ENCODE measurements at regions of chr1 and their contacts with region 1.

Region 1: DNA sequence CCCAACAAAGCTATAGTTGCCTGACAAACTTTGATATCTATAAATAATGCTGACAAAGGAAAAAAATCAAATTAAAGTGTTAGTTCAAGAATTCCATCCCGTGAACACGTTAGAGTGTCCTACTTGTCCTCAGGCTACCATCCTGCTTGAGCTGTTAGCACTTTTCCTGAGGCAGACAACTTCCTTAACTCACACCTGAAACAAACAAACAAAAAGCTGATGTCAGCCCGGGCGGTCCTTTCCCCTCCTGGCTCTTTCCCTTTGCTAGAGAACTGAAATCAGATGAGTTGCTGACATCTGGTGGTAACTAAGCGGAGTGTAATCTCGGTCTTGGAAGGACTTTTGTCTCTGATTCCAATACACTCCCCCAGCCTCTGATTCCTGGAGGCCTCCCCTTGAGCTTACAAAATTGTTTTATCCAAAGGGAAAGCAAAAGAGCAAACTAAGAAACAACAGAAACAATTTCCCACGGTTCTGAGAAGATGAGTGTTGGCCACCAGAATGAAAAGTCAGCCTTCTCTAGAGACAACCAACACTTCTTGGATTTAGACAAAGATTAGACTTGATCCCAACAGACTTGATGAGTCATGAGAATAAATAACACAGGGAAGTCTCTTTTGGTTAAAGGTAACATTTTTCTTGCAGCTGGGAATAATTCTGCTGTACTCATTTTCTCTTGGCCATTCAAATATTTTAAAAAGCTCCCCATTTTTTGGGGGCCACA is 135.4 kb downstream of the PROX1 start:
- DNase-seq: peak in 1 of 2 donors; percentile 17
- ATAC-seq: peak; percentile 79 to 89
- H3K4me3 ChIP-seq: peak overlapping the region in 1 of 4 donors; percentile 27
- H3K27ac ChIP-seq: no peak overlapping the region
- H3K4me1 ChIP-seq: no peaks in the 10 kb centered on the region
- H3K27me3 ChIP-seq: no peaks in the 10 kb centered on the region
- CTCF ChIP-seq: peak; percentile 46 to 69 (median 59)
- POLR2A ChIP-seq: no peak

Region 2: DNA sequence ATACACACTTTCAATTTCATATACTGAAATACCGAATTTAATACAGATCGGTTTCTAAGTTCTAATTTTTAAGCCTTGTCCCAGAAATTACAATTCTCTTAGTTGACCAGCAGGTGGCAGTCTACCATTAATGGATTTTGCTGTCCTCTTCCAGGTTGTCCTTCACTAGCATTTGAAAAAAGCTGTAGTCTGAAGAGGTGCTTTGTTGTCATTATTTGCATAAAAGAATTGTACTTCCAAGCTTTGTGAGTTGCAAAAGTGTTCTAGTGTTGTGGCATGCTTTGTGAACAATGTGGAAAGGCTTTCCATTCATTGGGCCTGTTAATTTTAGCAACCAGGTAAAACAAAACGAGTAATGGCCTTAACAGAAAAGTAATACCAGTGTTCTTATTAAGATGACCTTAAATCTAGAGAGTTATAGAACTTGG is 878.5 kb before region 1 on chr1:
- in situ Hi-C with region 1: loop called in 2 of 4 experiments (anchors 25 kb)
- intact Hi-C with region 1: loop called (anchors 10 kb)
- DNase-seq: no peak
- ATAC-seq: no peak
- H3K4me3 ChIP-seq: no peak overlapping the region
- H3K27ac ChIP-seq: no peak overlapping the region
- H3K4me1 ChIP-seq: no peaks in the 10 kb centered on the region
- H3K27me3 ChIP-seq: no peaks in the 10 kb centered on the region
- CTCF ChIP-seq: peak; percentile 46 to 76 (median 62)
- POLR2A ChIP-seq: no peak

Region 3: GRCh38 chr1:213374369-213374768 is 748.9 kb before region 1 on chr1:
- in situ Hi-C with region 1: loop called (anchors 5 to 25 kb)
- intact Hi-C with region 1: loop called (anchors 1 kb)
- DNase-seq: peak in 1 of 2 donors; percentile 17
- ATAC-seq: peak; percentile 66 to 68
- H3K4me3 ChIP-seq: no peak overlapping the region
- H3K27ac ChIP-seq: no peak overlapping the region
- H3K4me1 ChIP-seq: no peaks in the 10 kb centered on the region
- H3K27me3 ChIP-seq: no peaks in the 10 kb centered on the region
- CTCF ChIP-seq: peak; percentile 53 to 78 (median 68)
- POLR2A ChIP-seq: no peak

Region 4: GRCh38 chr1:213564215-213564659 is 559.0 kb before region 1 on chr1:
- in situ Hi-C with region 1: no loop called
- intact Hi-C with region 1: loop called (anchors 1 kb)
- DNase-seq: no peak
- ATAC-seq: no peak
- H3K4me3 ChIP-seq: no peak overlapping the region
- H3K27ac ChIP-seq: no peak overlapping the region
- H3K4me1 ChIP-seq: no peaks in the 10 kb centered on the region
- H3K27me3 ChIP-seq: no peaks in the 10 kb centered on the region
- CTCF ChIP-seq: no peak
- POLR2A ChIP-seq: no peak

Region 5: GRCh38 chr1:213987927-213988506 is 135.2 kb before region 1 on chr1 and contains the start of gene PROX1:
- in situ Hi-C with region 1: no loop called
- intact Hi-C with region 1: loop called (anchors 5 kb)
- DNase-seq: peak in 1 of 2 donors; percentile 73
- ATAC-seq: peak; percentile 88 to 89
- H3K4me3 ChIP-seq: peak within 1 kb of the TSS; percentile 65 to 85 (median 82)
- H3K27ac ChIP-seq: peak within 1 kb of the TSS; percentile 90 to 92 (median 90)
- H3K4me1 ChIP-seq: peaks cover 26 to 28% of the 10 kb centered on the region in 2 donors
- H3K27me3 ChIP-seq: peaks cover 0 to 27% (median 26%) of the 10 kb centered on the region in 3 donors
- CTCF ChIP-seq: peak in 2 of 5 experiments; percentile 28 to 42
- POLR2A ChIP-seq: peak; percentile 86 to 93
- total RNA-seq, gene PROX1: 4.1 to 8.0 (median 5.5) TPM

Region 6: DNA sequence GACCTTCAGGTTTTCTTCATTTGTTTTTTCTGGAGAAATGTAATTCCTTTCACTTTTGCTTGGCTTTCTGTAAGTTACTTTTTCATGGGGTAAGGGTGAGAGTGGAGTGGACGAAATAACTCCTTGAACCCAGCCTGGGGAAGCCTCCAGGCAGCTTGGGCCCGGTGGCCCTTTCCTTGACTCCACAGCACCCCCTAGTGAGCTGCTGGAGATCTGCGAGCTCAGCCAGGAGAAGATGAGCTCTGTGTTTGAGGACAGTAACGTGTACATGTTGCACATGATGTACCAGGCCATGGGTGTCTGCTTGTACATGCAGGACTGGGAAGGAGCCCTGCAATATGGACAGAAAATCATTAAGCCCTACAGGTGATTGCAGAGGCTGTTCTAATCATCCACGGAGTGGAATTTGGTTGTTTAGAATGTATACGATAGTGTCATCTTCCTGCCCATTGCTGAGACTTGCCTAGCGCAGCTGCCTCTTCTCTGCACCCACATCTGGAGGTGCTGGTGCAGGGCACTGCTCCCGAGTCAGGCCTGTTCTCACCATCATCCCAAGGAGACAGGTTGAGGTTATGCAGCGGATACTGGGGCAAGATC is 208.7 kb after region 1 on chr1:
- in situ Hi-C with region 1: no loop called
- intact Hi-C with region 1: no loop called
- DNase-seq: no peak
- ATAC-seq: peak in 1 of 2 donors; percentile 15
- H3K4me3 ChIP-seq: no peak overlapping the region
- H3K27ac ChIP-seq: no peak overlapping the region
- H3K4me1 ChIP-seq: peaks cover 6 to 15% of the 10 kb centered on the region in 2 donors
- H3K27me3 ChIP-seq: no peaks in the 10 kb centered on the region
- CTCF ChIP-seq: peak; percentile 54 to 76 (median 61)
- POLR2A ChIP-seq: no peak